WTC11 (cell line): ENCODE measurements at regions of chr19 and their contacts with region 1.

Region 1: GRCh38 chr19:14577885-14578427 is 4.9 kb upstream of the CLEC17A start:
- DNase-seq: no peak
- ATAC-seq: peak; percentile 79
- H3K4me3 Mint-ChIP-seq: no peak overlapping the region
- H3K27ac Mint-ChIP-seq: peak overlapping the region; percentile 51; the same call in 1 of the 2 replicates
- H3K4me1 Mint-ChIP-seq: peaks cover 8% of the 10 kb centered on the region; the same call in 1 of the 2 replicates
- H3K27me3 Mint-ChIP-seq: no peaks in the 10 kb centered on the region; the same call in 1 of the 2 replicates
- CTCF ChIP-seq: no peak

Region 2: DNA sequence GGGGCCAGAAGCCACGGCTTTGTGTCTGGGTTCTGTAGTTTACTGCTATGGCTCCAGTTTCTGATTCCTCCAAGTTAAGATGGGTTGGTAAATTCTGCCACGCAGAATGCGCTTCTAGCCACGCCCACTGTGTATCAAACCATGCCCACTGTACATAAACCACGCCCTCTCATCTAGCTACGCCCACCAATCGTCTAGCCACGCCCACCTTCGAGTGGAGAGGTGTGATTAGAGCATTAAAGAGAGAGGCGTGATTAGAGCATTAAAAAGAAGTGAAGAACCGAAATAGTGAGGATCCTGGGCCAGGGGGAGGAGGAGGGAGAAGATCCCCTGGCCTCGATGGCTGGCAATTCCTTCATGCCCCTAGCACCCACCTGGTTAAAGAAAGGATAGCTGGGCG is 240.4 kb before region 1 on chr19:
- CTCF ChIA-PET with region 1: no interaction called
- POLR2A ChIA-PET with region 1: no interaction called
- DNase-seq: peak; percentile 82
- ATAC-seq: peak; percentile 89
- H3K4me3 Mint-ChIP-seq: no peak overlapping the region
- H3K27ac Mint-ChIP-seq: no peak overlapping the region
- H3K4me1 Mint-ChIP-seq: peaks cover 9% of the 10 kb centered on the region; the same call in 1 of the 2 replicates
- H3K27me3 Mint-ChIP-seq: peaks cover 8% of the 10 kb centered on the region
- CTCF ChIP-seq: no peak

Region 3: DNA sequence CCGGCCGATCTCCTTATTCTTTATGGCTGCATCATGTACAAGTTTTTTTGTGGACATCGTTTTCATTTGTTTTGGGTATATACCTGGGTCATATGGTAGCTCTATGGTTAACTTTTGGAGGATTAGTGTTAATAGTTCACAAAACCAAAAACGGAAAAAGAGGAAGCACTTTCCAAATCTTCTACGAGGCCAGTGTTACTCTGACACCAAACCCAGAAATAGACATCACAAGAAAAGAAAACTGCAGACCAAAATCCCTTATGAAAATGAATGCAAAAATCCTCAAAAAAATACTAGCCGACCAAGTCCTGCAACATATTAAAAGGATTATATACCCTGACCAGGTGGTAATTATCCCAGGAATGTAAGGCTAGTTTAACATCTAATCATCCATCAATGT is 170.6 kb after region 1 on chr19:
- CTCF ChIA-PET with region 1: interaction called, 5 read pairs
- POLR2A ChIA-PET with region 1: interaction called, 10 read pairs
- DNase-seq: no peak
- ATAC-seq: no peak
- H3K4me3 Mint-ChIP-seq: no peak overlapping the region
- H3K27ac Mint-ChIP-seq: no peak overlapping the region
- H3K4me1 Mint-ChIP-seq: no peaks in the 10 kb centered on the region
- H3K27me3 Mint-ChIP-seq: no peaks in the 10 kb centered on the region
- CTCF ChIP-seq: no peak